Activated B cell treated with CpG ODN at 0.5 μM for 24 hours (primary cell): ENCODE measurements at regions of chr4 and their contacts with region 1.

Region 1: GRCh38 chr4:11424000-11424399 is 4.7 kb downstream of the HS3ST1 start:
- DNase-seq: no peak
- ATAC-seq: no peak
- H3K4me3 Mint-ChIP-seq: no peak overlapping the region
- H3K27ac Mint-ChIP-seq: peak overlapping the region; percentile 13
- H3K4me1 Mint-ChIP-seq: peaks cover 77% of the 10 kb centered on the region
- H3K27me3 Mint-ChIP-seq: peaks cover 2% of the 10 kb centered on the region
- CTCF ChIP-seq: no peak

Region 2: GRCh38 chr4:10554694-10555093 is 869.3 kb before region 1 on chr4:
- CTCF ChIA-PET with region 1: interaction called, 5 read pairs
- POLR2A ChIA-PET with region 1: no interaction called
- intact Hi-C with region 1: loop called (anchors 1 kb)
- DNase-seq: no peak
- ATAC-seq: peak; percentile 72
- H3K4me3 Mint-ChIP-seq: no peak overlapping the region
- H3K27ac Mint-ChIP-seq: no peak overlapping the region
- H3K4me1 Mint-ChIP-seq: peaks cover 10% of the 10 kb centered on the region
- H3K27me3 Mint-ChIP-seq: no peaks in the 10 kb centered on the region
- CTCF ChIP-seq: no peak

Region 3: GRCh38 chr4:10582059-10582686 is 841.8 kb before region 1 on chr4:
- CTCF ChIA-PET with region 1: interaction called, 21 read pairs
- POLR2A ChIA-PET with region 1: interaction called, 3 read pairs
- intact Hi-C with region 1: loop called (anchors 1 kb)
- DNase-seq: no peak
- ATAC-seq: no peak
- H3K4me3 Mint-ChIP-seq: no peak overlapping the region
- H3K27ac Mint-ChIP-seq: no peak overlapping the region
- H3K4me1 Mint-ChIP-seq: peaks cover 25% of the 10 kb centered on the region
- H3K27me3 Mint-ChIP-seq: no peaks in the 10 kb centered on the region
- CTCF ChIP-seq: no peak

Region 4: GRCh38 chr4:10622728-10623127 is 801.3 kb before region 1 on chr4:
- CTCF ChIA-PET with region 1: interaction called, 8 read pairs
- POLR2A ChIA-PET with region 1: no interaction called
- intact Hi-C with region 1: loop called (anchors 1 kb)
- DNase-seq: no peak
- ATAC-seq: peak; percentile 49
- H3K4me3 Mint-ChIP-seq: no peak overlapping the region
- H3K27ac Mint-ChIP-seq: no peak overlapping the region
- H3K4me1 Mint-ChIP-seq: peaks cover 14% of the 10 kb centered on the region
- H3K27me3 Mint-ChIP-seq: no peaks in the 10 kb centered on the region
- CTCF ChIP-seq: no peak

Region 5: DNA sequence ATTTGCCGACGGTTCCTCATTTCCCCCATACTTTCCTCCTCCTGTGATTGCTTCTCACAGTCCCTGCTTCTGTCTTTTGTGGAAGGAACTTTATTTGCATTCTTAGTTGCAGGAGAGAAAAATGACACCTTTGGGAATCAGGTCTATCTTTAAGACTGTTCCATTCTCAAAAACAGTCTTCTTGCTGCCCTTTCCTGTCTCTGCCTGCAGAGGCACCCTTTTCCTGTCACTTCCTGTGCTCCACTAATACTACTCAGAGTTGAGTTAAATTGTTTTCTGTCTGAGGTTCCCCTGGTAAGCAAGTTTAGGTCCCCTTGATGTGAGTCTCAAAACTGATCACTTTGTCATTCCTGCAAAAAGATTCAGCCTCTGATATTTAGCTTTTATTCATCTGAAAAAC is 530.6 kb before region 1 on chr4:
- CTCF ChIA-PET with region 1: interaction called, 6 read pairs
- POLR2A ChIA-PET with region 1: no interaction called
- intact Hi-C with region 1: loop called (anchors 1 kb)
- DNase-seq: no peak
- ATAC-seq: no peak
- H3K4me3 Mint-ChIP-seq: no peak overlapping the region
- H3K27ac Mint-ChIP-seq: no peak overlapping the region
- H3K4me1 Mint-ChIP-seq: peaks cover 18% of the 10 kb centered on the region
- H3K27me3 Mint-ChIP-seq: no peaks in the 10 kb centered on the region
- CTCF ChIP-seq: no peak

Region 6: GRCh38 chr4:11149612-11150259 is 274.3 kb before region 1 on chr4:
- CTCF ChIA-PET with region 1: no interaction called
- POLR2A ChIA-PET with region 1: interaction called, 13 read pairs
- intact Hi-C with region 1: no loop called
- DNase-seq: no peak
- ATAC-seq: peak; percentile 77
- H3K4me3 Mint-ChIP-seq: peak overlapping the region; percentile 36
- H3K27ac Mint-ChIP-seq: peak overlapping the region; percentile 32
- H3K4me1 Mint-ChIP-seq: peaks cover 23% of the 10 kb centered on the region
- H3K27me3 Mint-ChIP-seq: no peaks in the 10 kb centered on the region
- CTCF ChIP-seq: no peak

Region 7: DNA sequence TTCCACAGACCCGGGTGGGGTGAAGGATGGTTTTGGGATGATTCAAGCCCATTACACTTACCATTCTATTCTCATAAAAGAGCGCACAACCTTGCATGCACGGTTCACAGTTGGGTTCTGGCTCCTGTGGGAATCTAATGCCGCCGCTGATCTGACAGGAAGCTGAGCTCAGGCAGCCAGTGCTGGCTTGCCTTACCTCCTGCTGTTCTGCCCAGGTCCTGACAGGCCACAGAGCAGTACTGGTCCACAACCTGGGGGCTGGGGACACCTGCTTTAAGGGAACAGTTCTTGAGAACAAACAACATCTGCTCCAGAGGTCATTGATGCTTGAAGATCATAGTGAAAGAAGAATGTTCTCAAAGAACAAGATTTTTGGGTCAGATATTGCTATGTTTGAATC is 12.7 kb after region 1 on chr4:
- CTCF ChIA-PET with region 1: interaction called, 10 read pairs
- POLR2A ChIA-PET with region 1: interaction called, 4 read pairs
- intact Hi-C with region 1: no loop called
- DNase-seq: no peak
- ATAC-seq: peak; percentile 58
- H3K4me3 Mint-ChIP-seq: peak overlapping the region; percentile 73
- H3K27ac Mint-ChIP-seq: peak overlapping the region; percentile 82
- H3K4me1 Mint-ChIP-seq: peaks cover 74% of the 10 kb centered on the region
- H3K27me3 Mint-ChIP-seq: no peaks in the 10 kb centered on the region
- CTCF ChIP-seq: no peak